ENCODE measurements at regions of chr2 and their contacts with region 1.

Region 1: DNA sequence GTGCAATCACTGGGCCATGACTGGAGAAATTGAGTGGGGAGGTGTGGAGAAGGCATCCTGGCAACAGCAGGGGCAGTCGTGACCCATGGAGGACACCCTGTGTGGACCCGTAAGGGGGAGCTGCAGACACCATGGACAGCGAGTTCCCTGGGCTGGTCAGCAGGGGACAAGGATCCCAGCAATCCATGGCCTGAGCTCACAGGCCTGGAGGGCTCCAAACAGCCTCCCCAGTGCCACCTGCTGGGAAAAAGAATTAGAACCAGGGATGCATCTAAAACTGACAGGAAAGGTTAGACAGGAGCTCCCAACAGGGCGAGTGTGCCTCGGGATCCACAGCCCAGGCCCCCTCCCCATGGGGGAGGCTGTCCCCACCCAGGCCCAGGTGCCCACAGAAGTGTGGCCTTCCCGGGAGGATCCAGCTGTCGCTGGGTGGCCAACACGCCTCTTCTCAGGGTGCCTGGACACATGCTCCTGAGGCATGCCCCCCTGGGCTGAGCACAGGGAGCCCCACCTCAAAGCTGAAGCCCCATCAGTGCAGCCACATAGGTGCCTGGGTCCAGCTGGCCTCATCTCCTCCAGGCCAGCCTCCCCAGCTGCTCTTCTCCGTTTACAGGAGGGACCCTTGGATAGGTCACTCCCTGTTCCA is 20.5 kb upstream of the KIF1A start:
- DNase-seq: peak; percentile 70
- H3K4me3 Mint-ChIP-seq: no peak overlapping the region
- H3K27ac Mint-ChIP-seq: no peak overlapping the region
- H3K4me1 Mint-ChIP-seq: no peaks in the 10 kb centered on the region
- H3K27me3 Mint-ChIP-seq: peaks cover 76% of the 10 kb centered on the region
- CTCF ChIP-seq: peak; percentile 53

Region 2: GRCh38 chr2:240810207-240810606 is 30.4 kb before region 1 on chr2:
- CTCF ChIA-PET with region 1: interaction called, 3 read pairs
- POLR2A ChIA-PET with region 1: no interaction called
- intact Hi-C with region 1: loop called (anchors 1 kb)
- DNase-seq: no peak
- H3K4me3 Mint-ChIP-seq: no peak overlapping the region
- H3K27ac Mint-ChIP-seq: no peak overlapping the region
- H3K4me1 Mint-ChIP-seq: peaks cover 5% of the 10 kb centered on the region
- H3K27me3 Mint-ChIP-seq: peaks cover 16% of the 10 kb centered on the region
- CTCF ChIP-seq: no peak

Region 3: DNA sequence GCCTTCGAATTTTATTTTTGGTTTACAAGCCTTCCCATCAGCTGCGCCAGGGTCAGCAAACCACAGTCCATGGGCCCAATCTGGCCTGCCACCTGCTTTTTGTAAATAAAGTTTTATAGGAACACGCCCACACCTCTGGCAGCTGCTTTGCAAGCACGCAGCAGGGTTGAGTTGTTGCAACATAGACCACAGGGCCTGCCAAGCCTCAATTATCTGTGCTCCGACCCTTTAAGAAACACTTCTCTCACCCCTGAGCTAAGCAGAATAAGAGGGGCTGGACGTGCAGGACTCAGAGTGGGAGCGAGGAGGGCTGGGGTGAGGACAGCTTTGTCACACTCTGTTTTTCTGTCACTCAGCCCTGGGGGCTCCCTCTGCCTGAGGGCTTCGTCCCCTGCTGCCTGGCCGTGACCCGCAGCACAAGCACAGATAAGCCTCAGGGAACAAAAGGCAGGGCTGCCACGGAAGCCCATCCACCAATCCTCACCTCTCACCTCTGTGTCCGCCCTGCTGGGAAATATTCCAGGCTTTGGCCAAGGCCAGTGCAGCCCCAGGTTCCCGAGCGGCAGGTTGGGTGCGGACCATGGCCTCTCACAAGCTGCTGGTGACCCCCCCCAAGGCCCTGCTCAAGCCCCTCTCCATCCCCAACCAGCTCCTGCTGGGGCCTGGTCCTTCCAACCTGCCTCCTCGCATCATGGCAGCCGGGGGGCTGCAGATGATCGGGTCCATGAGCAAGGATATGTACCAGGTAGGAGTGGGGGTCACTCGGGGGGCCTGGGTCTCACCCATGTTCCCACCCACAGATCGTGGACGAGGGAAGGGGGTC is 27.9 kb after region 1 on chr2 and contains the start of gene AGXT:
- CTCF ChIA-PET with region 1: no interaction called
- POLR2A ChIA-PET with region 1: no interaction called
- intact Hi-C with region 1: no loop called
- DNase-seq: peak; percentile 55
- H3K4me3 Mint-ChIP-seq: no peak within 1 kb of the TSS
- H3K27ac Mint-ChIP-seq: no peak within 1 kb of the TSS
- H3K4me1 Mint-ChIP-seq: peaks cover 13% of the 10 kb centered on the region
- H3K27me3 Mint-ChIP-seq: peaks cover 11% of the 10 kb centered on the region
- CTCF ChIP-seq: no peak
- total RNA-seq, gene AGXT: not detected in 2 replicates

Measured in MCF 10A (cell line).